Activated naive CD8-positive, alpha-beta T cell treated with anti-CD3 and anti-CD28 coated beads, Interleukin-2, amount 10 ng/mL, durations not matched to agents 7 days and 5 days (primary cell): ENCODE measurements at regions of chr5 and their contacts with region 1.

Region 1: GRCh38 chr5:180831139-180832048 is 28.8 kb upstream of the MGAT1 start:
- DNase-seq: peak; percentile 87
- ATAC-seq: peak; percentile 68
- H3K4me3 Mint-ChIP-seq: peak overlapping the region; percentile 98
- H3K27ac Mint-ChIP-seq: peak overlapping the region; percentile 97
- H3K4me1 Mint-ChIP-seq: peaks cover 30% of the 10 kb centered on the region
- H3K27me3 Mint-ChIP-seq: no peaks in the 10 kb centered on the region

Region 2: GRCh38 chr5:180810210-180810958 is 21.0 kb before region 1 on chr5:
- POLR2A ChIA-PET with region 1: interaction called, 170 read pairs
- DNase-seq: peak; percentile 96
- ATAC-seq: peak; percentile 74
- H3K4me3 Mint-ChIP-seq: peak overlapping the region; percentile 88
- H3K27ac Mint-ChIP-seq: peak overlapping the region; percentile 100
- H3K4me1 Mint-ChIP-seq: peaks cover 57% of the 10 kb centered on the region
- H3K27me3 Mint-ChIP-seq: no peaks in the 10 kb centered on the region

Region 3: DNA sequence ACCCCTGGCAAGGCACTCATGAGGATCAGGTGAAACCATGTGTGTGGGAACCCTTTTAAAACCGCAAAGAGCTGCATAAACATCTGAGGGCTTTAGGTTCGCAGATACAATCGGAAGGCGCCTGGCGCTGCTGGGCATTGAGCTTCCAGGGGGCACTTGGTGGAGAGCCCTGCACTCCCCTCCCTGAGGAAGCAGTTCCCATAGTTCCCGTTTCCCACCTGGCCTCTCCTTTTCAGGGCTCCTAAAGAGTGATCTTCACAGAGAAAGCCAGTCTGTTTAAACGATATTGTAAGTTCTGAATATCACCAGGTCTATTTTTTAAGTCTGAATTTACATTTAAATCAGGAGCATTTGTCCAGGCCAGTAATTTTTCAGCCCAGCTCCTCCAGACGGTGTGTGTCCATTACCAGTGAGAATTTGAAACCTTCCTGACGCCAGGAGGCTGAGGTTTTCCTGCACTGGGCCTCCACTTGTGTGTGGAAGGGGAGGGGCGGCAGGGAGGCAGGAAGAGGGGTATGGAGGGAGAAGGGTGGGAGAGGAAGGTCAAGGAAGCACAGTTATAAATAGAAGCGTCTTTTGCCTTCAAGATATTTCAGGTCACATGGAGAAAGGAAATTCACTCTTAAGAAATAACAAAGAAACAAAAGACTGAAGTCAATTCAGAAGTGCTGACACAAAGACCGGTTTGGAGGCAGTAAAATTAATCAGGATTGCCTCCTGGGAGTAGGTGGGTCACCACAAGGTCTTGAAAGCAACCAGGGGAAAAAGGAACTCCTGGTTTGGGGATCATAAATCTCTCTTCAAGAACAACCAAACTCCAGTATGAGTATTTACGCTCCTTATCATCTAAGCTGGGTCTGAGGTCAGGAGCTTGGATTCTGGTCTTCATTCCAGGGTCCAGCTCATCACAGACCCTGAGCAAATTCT is 14.5 kb before region 1 on chr5:
- POLR2A ChIA-PET with region 1: interaction called, 110 read pairs
- DNase-seq: no peak
- ATAC-seq: peak; percentile 52
- H3K4me3 Mint-ChIP-seq: peak overlapping the region; percentile 11
- H3K27ac Mint-ChIP-seq: peak overlapping the region; percentile 9
- H3K4me1 Mint-ChIP-seq: peaks cover 32% of the 10 kb centered on the region
- H3K27me3 Mint-ChIP-seq: no peaks in the 10 kb centered on the region

Region 4: DNA sequence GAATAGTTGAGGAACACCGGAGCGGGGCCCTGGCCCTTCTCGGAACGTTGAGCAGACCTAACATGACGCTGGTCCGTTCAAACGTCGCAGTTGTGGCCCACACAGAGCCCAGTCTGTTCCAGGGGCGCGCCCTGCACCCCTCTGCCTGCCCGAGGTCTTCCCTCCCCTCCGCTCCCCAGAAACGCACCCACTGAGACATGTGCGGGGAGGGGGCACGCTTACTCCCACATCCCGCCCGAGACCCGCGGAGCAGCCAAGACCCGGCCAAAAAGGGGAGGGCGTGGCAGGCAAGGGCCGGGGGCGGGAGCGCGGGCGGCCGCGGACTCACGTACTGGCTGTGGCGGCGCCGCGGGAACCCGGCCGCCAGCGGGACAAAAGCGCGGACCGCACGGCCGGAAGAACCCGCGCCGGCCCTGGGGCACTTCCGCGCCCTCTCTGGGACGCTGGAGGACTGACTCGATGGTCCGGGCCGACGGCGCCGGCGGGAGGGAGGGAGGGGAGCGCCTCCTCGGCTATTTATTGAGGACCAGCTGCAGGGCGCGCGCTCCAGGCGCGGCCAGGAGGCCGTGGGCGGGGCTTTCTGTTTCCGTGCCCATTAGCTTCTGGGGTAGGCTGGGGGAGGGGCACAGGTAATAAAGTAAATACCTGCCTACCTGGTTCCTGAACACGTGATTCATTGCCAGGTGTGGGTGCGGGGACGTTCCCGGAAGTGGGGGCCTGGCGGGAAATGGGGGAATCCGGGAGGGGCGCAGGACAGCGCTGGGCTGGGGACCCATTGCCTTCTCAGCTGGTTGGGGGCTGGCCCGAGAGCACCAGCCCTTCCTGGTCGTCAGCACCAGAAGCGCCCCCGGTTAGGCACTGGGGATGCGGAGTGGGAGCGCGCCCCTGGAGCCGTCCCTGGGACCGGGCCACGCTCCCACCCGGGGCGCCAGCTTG is 29.8 kb after region 1 on chr5 and contains the start of gene ZFP62:
- POLR2A ChIA-PET with region 1: interaction called, 62 read pairs
- DNase-seq: peak; percentile 90
- ATAC-seq: peak; percentile 83
- H3K4me3 Mint-ChIP-seq: peak within 1 kb of the TSS; percentile 95
- H3K27ac Mint-ChIP-seq: peak within 1 kb of the TSS; percentile 95
- H3K4me1 Mint-ChIP-seq: peaks cover 14% of the 10 kb centered on the region
- H3K27me3 Mint-ChIP-seq: peaks cover 2% of the 10 kb centered on the region
- total RNA-seq, gene ZFP62: 42.3 to 42.7 TPM

Region 5: GRCh38 chr5:180873615-180874520 is 42.5 kb after region 1 on chr5:
- POLR2A ChIA-PET with region 1: no interaction called
- DNase-seq: no peak
- ATAC-seq: no peak
- H3K4me3 Mint-ChIP-seq: no peak overlapping the region
- H3K27ac Mint-ChIP-seq: no peak overlapping the region
- H3K4me1 Mint-ChIP-seq: peaks cover 6% of the 10 kb centered on the region
- H3K27me3 Mint-ChIP-seq: peaks cover 8% of the 10 kb centered on the region